ENCODE measurements at regions of chr3 and their contacts with region 1.

Region 1: GRCh38 chr3:143971367-143972154 is at the start of gene DIPK2A:
- DNase-seq: peak; percentile 88
- ATAC-seq: peak; percentile 88
- H3K4me3 ChIP-seq: peak within 1 kb of the TSS; percentile 73 to 93
- H3K27ac ChIP-seq: peak within 1 kb of the TSS; percentile 93
- H3K4me1 ChIP-seq: peaks cover 21% of the 10 kb centered on the region
- H3K27me3 ChIP-seq: no peaks in the 10 kb centered on the region
- CTCF ChIP-seq: no peak
- total RNA-seq, gene DIPK2A: 14.3 TPM

Region 2: GRCh38 chr3:142356818-142357217 is 1614.7 kb before region 1 on chr3:
- CTCF ChIA-PET with region 1: no interaction called
- POLR2A ChIA-PET with region 1: no interaction called
- in situ Hi-C with region 1: no loop called
- intact Hi-C with region 1: no loop called
- DNase-seq: no peak
- ATAC-seq: no peak
- H3K4me3 ChIP-seq: no peak overlapping the region
- H3K27ac ChIP-seq: no peak overlapping the region
- H3K4me1 ChIP-seq: no peaks in the 10 kb centered on the region
- H3K27me3 ChIP-seq: no peaks in the 10 kb centered on the region
- CTCF ChIP-seq: no peak

Region 3: DNA sequence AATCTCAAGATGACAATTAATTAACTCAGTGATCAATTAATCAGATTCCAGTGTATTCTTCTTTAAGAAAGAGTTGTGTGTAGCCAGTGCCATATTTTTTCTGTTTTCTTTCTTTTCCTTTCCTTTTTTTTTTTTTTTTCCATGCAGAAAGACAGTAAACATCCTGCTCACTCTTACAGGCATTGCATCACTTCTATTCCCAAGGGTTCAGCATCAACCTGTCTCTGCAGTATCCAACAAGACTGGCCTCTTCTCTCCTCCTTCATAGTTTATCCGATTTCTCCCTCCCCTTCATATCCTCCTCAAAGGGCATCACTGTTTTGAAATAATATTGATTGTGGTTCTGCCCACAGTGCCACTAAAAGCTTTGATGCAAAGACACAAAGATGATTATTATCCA is 106.3 kb before region 1 on chr3:
- CTCF ChIA-PET with region 1: interaction called, 10 read pairs
- POLR2A ChIA-PET with region 1: no interaction called
- in situ Hi-C with region 1: no loop called
- intact Hi-C with region 1: no loop called
- DNase-seq: no peak
- ATAC-seq: no peak
- H3K4me3 ChIP-seq: no peak overlapping the region
- H3K27ac ChIP-seq: no peak overlapping the region
- H3K4me1 ChIP-seq: no peaks in the 10 kb centered on the region
- H3K27me3 ChIP-seq: no peaks in the 10 kb centered on the region
- CTCF ChIP-seq: no peak

Region 4: DNA sequence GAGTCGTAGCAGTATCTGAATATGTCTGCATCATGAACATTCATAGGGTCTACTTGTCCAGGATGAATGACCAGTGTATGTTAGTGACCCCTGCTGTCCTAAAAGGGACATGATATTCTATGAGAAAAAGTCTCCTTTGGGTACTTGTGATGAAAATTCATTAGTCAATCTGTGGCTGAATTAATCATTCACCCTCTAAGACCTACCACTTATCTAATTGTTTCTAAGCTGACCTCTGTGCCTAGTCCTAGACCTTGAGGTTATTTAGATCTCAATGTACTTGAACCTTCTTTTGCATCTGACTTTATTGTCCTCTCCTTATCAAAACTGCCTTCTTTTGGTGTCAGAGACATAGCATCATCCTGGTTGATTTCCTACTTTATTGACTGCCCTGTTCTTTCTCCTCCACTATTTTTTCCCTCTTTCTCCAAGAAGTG is 799.4 kb after region 1 on chr3:
- CTCF ChIA-PET with region 1: no interaction called
- POLR2A ChIA-PET with region 1: no interaction called
- in situ Hi-C with region 1: no loop called
- intact Hi-C with region 1: loop called (anchors 5 kb)
- DNase-seq: no peak
- ATAC-seq: no peak
- H3K4me3 ChIP-seq: no peak overlapping the region
- H3K27ac ChIP-seq: no peak overlapping the region
- H3K4me1 ChIP-seq: no peaks in the 10 kb centered on the region
- H3K27me3 ChIP-seq: no peaks in the 10 kb centered on the region
- CTCF ChIP-seq: peak; percentile 28; the same call in 1 of the 2 replicates

Measured in Panc1 (cell line).